HepG2 (cell line): ENCODE measurements at regions of chr2 and their contacts with region 1.

Region 1: GRCh38 chr2:38750891-38751595 is at the start of gene SRSF7:
- DNase-seq: peak; percentile 97
- ATAC-seq: peak; percentile 80
- H3K4me3 ChIP-seq: peak within 1 kb of the TSS; percentile 83 to 94 (median 85)
- H3K27ac ChIP-seq: peak within 1 kb of the TSS; percentile 87
- H3K4me1 ChIP-seq: peaks cover 64% of the 10 kb centered on the region
- H3K27me3 ChIP-seq: no peaks in the 10 kb centered on the region; a peak in 1 of 5 replicates
- CTCF ChIP-seq: no peak
- EP300 ChIP-seq: peak in 1 of 2 experiments; percentile 45; a peak in 2 of 4 replicates
- POLR2A ChIP-seq: peak; percentile 100
- RAD21 ChIP-seq: peak; percentile 56; the same call in 1 of the 2 replicates
- total RNA-seq, gene SRSF7: 275 and 377 TPM in 2 replicates

Region 2: GRCh38 chr2:38498045-38498481 is 253.0 kb before region 1 on chr2:
- CTCF ChIA-PET with region 1: no interaction called
- POLR2A ChIA-PET with region 1: interaction called, 10 read pairs
- in situ Hi-C with region 1: no loop called
- intact Hi-C with region 1: no loop called
- DNase-seq: peak; percentile 34
- ATAC-seq: no peak
- H3K4me3 ChIP-seq: no peak overlapping the region; a peak in 1 of 6 replicates
- H3K27ac ChIP-seq: peak overlapping the region; percentile 65
- H3K4me1 ChIP-seq: peaks cover 63% of the 10 kb centered on the region
- H3K27me3 ChIP-seq: no peaks in the 10 kb centered on the region
- CTCF ChIP-seq: no peak
- EP300 ChIP-seq: no peak; a peak in 1 of 4 replicates
- POLR2A ChIP-seq: no peak
- RAD21 ChIP-seq: no peak

Region 3: DNA sequence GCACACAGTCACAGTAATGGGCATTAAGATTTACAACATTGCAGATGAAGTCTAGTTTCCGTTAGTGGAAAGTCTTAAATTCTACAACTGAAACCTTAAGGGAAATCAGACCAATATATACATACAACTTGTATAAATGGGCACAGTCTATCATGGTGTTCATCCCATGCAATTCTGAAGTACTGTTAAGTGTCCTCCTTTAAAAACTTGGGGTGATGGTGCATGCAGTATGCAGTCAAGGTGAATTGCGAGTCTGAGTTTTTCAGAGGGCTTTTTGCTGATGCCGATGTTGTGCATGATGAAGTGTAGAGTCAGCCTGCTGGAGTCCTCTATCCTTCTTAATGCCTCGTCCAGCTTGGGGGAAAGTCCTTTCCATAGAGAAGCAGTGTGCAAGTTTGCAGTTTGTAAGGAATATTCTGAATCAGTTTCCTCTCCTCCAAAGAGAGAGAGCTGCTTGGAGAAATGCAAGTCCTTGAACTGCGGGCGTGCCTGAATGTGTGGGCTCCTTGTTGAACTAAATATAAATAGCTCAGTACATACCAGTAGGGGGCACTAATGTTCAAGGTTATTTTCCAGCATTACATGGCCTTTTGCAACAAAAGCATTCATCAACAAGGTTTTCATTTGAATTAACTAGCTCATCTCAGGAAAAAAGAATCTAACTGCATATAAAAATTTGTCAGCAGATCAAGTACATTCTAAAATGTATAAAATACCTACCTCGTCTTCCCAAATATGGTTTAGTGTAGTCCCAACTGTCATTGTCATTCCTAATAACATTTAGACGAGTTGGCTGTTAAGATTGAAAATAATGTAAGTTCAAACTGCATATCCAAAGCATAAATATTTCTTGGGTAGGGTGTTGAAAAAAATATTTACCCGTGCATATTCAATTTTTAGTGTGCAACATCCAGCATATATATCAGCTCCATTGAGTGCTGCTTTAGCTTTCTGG is 169.6 kb before region 1 on chr2:
- CTCF ChIA-PET with region 1: no interaction called
- POLR2A ChIA-PET with region 1: interaction called, 16 read pairs
- in situ Hi-C with region 1: no loop called
- intact Hi-C with region 1: no loop called
- DNase-seq: peak; percentile 80
- ATAC-seq: peak; percentile 89
- H3K4me3 ChIP-seq: no peak overlapping the region
- H3K27ac ChIP-seq: no peak overlapping the region
- H3K4me1 ChIP-seq: peaks cover 22% of the 10 kb centered on the region
- H3K27me3 ChIP-seq: no peaks in the 10 kb centered on the region
- CTCF ChIP-seq: peak; percentile 81
- EP300 ChIP-seq: no peak
- POLR2A ChIP-seq: no peak
- RAD21 ChIP-seq: peak; percentile 85

Region 4: GRCh38 chr2:38610851-38611801 is 139.9 kb before region 1 on chr2:
- CTCF ChIA-PET with region 1: no interaction called
- POLR2A ChIA-PET with region 1: interaction called, 12 read pairs
- in situ Hi-C with region 1: no loop called
- intact Hi-C with region 1: no loop called
- DNase-seq: peak; percentile 95
- ATAC-seq: peak; percentile 93
- H3K4me3 ChIP-seq: peak overlapping the region in 1 of 3 experiments; percentile 17; a peak in 1 of 6 replicates
- H3K27ac ChIP-seq: peak overlapping the region; percentile 73
- H3K4me1 ChIP-seq: peaks cover 80% of the 10 kb centered on the region
- H3K27me3 ChIP-seq: no peaks in the 10 kb centered on the region
- CTCF ChIP-seq: 0 out of 2 replicates have a peak, but pooled peaks have one; percentile 5
- EP300 ChIP-seq: peak; percentile 35 to 95; a peak in 2 of 4 replicates
- POLR2A ChIP-seq: peak in 1 of 2 experiments; percentile 33; a peak in 1 of 4 replicates
- RAD21 ChIP-seq: no peak

Region 5: DNA sequence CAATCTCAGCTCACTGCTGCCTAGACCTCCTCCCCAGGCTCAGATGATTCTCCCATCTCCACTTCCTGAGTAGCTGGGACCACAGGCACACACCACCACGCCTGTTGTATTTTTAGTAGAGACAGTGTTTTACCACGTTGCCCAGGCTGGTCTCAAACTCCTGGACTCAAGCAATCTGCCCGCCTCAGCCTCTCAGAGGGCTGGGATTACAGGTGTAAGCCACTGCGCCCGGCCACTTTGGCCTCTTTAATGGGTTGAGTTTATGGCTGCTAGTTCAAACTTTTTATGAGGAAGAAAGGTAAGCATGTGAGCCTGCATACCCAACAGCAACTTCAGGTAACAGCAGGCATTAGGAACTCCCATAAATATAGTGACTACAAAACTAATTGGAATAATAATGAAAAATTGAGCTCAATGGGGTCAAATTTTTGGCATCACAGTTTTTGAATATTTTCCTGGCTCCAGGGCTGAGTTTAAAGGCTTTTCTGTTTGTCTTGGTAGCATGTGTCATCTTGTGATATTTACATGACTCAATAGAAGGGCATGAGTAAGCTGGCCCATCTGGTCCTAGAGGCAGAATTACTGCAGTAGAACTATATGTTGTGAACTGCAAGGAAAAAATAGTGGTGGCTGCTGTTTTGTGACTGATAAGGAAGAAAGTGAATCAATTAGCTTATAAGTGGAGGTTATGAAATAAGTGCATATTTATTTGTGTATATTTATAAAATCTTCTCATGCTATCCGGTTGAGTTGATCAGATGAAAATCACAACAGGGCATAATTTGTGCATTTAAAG is 60.3 kb before region 1 on chr2:
- CTCF ChIA-PET with region 1: no interaction called
- POLR2A ChIA-PET with region 1: interaction called, 12 read pairs
- in situ Hi-C with region 1: no loop called
- intact Hi-C with region 1: no loop called
- DNase-seq: peak; percentile 85
- ATAC-seq: peak; percentile 71
- H3K4me3 ChIP-seq: no peak overlapping the region
- H3K27ac ChIP-seq: peak overlapping the region; percentile 54
- H3K4me1 ChIP-seq: peaks cover 66% of the 10 kb centered on the region
- H3K27me3 ChIP-seq: no peaks in the 10 kb centered on the region
- CTCF ChIP-seq: no peak
- EP300 ChIP-seq: peak in 1 of 2 experiments; percentile 66; a peak in 2 of 4 replicates
- POLR2A ChIP-seq: no peak
- RAD21 ChIP-seq: no peak

Region 6: DNA sequence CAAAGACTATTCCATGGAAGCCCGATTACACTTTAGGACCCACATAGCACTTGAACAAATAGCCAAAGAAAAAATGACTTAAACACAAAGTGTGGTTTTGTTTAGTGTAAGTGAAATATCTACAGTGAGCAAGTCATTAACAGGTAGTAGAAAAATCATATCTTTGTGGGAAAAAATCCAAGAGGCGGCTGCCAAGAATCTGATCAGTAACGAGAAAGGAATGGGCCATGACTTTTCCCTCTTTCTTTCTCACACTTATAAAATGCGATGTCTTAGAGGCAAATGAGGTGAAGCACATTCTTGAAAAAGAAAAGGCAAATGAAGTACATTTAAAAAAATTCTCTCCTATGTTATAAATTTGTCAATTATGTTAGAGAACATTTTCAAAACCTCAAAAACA is 14.1 kb after region 1 on chr2:
- CTCF ChIA-PET with region 1: no interaction called
- POLR2A ChIA-PET with region 1: interaction called, 20 read pairs
- in situ Hi-C with region 1: no loop called
- intact Hi-C with region 1: no loop called
- DNase-seq: no peak
- ATAC-seq: no peak
- H3K4me3 ChIP-seq: no peak overlapping the region
- H3K27ac ChIP-seq: no peak overlapping the region
- H3K4me1 ChIP-seq: peaks cover 34% of the 10 kb centered on the region
- H3K27me3 ChIP-seq: no peaks in the 10 kb centered on the region
- CTCF ChIP-seq: no peak
- EP300 ChIP-seq: no peak
- POLR2A ChIP-seq: no peak
- RAD21 ChIP-seq: no peak

Region 7: GRCh38 chr2:38794235-38794946 is 43.3 kb after region 1 on chr2:
- CTCF ChIA-PET with region 1: no interaction called
- POLR2A ChIA-PET with region 1: interaction called, 14 read pairs
- in situ Hi-C with region 1: no loop called
- intact Hi-C with region 1: no loop called
- DNase-seq: peak; percentile 39
- ATAC-seq: peak; percentile 83
- H3K4me3 ChIP-seq: peak overlapping the region in 1 of 3 experiments; percentile 1; a peak in 1 of 6 replicates
- H3K27ac ChIP-seq: peak overlapping the region; percentile 3
- H3K4me1 ChIP-seq: peaks cover 40% of the 10 kb centered on the region
- H3K27me3 ChIP-seq: no peaks in the 10 kb centered on the region
- CTCF ChIP-seq: no peak
- EP300 ChIP-seq: no peak
- POLR2A ChIP-seq: no peak
- RAD21 ChIP-seq: no peak